ENCODE measurements at regions of chr12 and their contacts with region 1.

Region 1: GRCh38 chr12:6752921-6753771 is at the start of gene MLF2:
- DNase-seq: peak; percentile 94 to 99 (median 96)
- ATAC-seq: peak; percentile 92
- H3K4me3 ChIP-seq: peak within 1 kb of the TSS; percentile 80
- H3K4me3 Mint-ChIP-seq: peak within 1 kb of the TSS; percentile 96
- H3K27ac ChIP-seq: peak within 1 kb of the TSS; percentile 86 to 96
- H3K27ac Mint-ChIP-seq: peak within 1 kb of the TSS; percentile 100
- H3K4me1 ChIP-seq: peaks cover 24% of the 10 kb centered on the region
- H3K4me1 Mint-ChIP-seq: peaks cover 19% of the 10 kb centered on the region
- H3K27me3 ChIP-seq: no peaks in the 10 kb centered on the region
- H3K27me3 Mint-ChIP-seq: no peaks in the 10 kb centered on the region
- CTCF ChIP-seq: peak; percentile 79
- total RNA-seq, gene MLF2: 114 to 121 TPM

Region 2: GRCh38 chr12:6662906-6663742 is 90.0 kb before region 1 on chr12 and contains the start of gene ING4:
- CTCF ChIA-PET with region 1: no interaction called
- POLR2A ChIA-PET with region 1: no interaction called
- intact Hi-C with region 1: loop called in 1 of 2 experiments (anchors 1 kb)
- DNase-seq: peak; percentile 88 to 99 (median 94)
- ATAC-seq: peak; percentile 97
- H3K4me3 ChIP-seq: peak within 1 kb of the TSS; percentile 82
- H3K4me3 Mint-ChIP-seq: peak within 1 kb of the TSS; percentile 95
- H3K27ac ChIP-seq: peak within 1 kb of the TSS; percentile 79 to 89
- H3K27ac Mint-ChIP-seq: peak within 1 kb of the TSS; percentile 91
- H3K4me1 ChIP-seq: peaks cover 29% of the 10 kb centered on the region
- H3K4me1 Mint-ChIP-seq: peaks cover 34% of the 10 kb centered on the region
- H3K27me3 ChIP-seq: no peaks in the 10 kb centered on the region
- H3K27me3 Mint-ChIP-seq: no peaks in the 10 kb centered on the region
- CTCF ChIP-seq: no peak
- total RNA-seq, gene ING4: 13.8 to 17.4 TPM

Region 3: DNA sequence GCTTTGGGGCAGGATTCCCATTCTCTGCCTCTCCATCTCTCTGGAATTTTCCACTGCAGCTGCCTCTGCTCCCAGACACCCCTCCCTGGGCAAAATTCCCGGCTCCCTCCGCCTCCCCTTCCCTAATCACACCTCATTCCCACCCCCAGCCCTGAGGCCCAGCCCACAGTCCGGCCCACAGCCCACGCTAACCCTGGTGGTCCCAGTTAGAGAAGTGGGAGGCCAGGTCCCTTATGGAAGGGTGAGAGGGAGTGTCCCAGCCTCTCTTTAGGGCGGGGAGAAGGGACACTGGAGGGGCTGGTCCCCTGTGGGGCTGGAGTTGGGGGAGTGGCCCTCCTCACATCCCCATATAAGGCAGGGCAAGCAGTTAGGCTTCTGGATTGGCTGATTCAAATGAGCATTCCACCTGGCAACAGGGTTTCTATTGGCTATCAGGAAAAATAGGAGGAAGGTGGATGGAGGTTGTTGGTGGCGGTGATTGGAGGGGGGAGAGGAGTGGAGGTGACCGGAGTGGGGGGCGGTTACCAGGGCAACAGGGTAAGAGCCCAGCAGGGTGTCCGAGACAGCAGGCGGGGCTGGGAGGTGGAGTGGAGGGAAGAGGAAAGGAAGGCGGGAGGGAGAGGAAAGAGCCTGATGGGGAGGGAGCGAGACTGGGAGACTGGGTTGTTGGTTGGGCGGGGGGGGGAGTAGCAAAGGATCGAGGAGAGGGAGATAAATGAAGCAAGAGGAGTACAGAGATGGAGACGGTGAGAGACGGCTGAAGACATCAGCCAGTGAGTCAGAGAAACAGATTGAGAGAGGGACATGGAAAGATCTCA is 11.1 kb after region 1 on chr12:
- CTCF ChIA-PET with region 1: interaction called, 27 read pairs
- POLR2A ChIA-PET with region 1: interaction called, 20 read pairs
- intact Hi-C with region 1: no loop called
- DNase-seq: peak in 7 of 14 experiments; percentile 25 to 82 (median 48)
- ATAC-seq: peak; percentile 83
- H3K4me3 ChIP-seq: peak overlapping the region; percentile 10
- H3K4me3 Mint-ChIP-seq: peak overlapping the region; percentile 65
- H3K27ac ChIP-seq: no peak overlapping the region
- H3K27ac Mint-ChIP-seq: no peak overlapping the region
- H3K4me1 ChIP-seq: peaks cover 34% of the 10 kb centered on the region
- H3K4me1 Mint-ChIP-seq: peaks cover 38% of the 10 kb centered on the region
- H3K27me3 ChIP-seq: peaks cover 22 to 31% of the 10 kb centered on the region in 2 experiments
- H3K27me3 Mint-ChIP-seq: peaks cover 46% of the 10 kb centered on the region
- CTCF ChIP-seq: no peak

Region 4: GRCh38 chr12:6786416-6787094 is 33.4 kb after region 1 on chr12:
- CTCF ChIA-PET with region 1: interaction called, 21 read pairs
- POLR2A ChIA-PET with region 1: interaction called, 18 read pairs
- intact Hi-C with region 1: loop called in 1 of 2 experiments (anchors 2 kb)
- DNase-seq: peak in 5 of 14 experiments; percentile 38 to 79 (median 67)
- ATAC-seq: peak; percentile 79
- H3K4me3 ChIP-seq: peak overlapping the region; percentile 19
- H3K4me3 Mint-ChIP-seq: peak overlapping the region; percentile 72
- H3K27ac ChIP-seq: peak overlapping the region; percentile 58 to 80
- H3K27ac Mint-ChIP-seq: peak overlapping the region; percentile 93
- H3K4me1 ChIP-seq: peaks cover 88% of the 10 kb centered on the region
- H3K4me1 Mint-ChIP-seq: peaks cover 73% of the 10 kb centered on the region
- H3K27me3 ChIP-seq: no peaks in the 10 kb centered on the region
- H3K27me3 Mint-ChIP-seq: no peaks in the 10 kb centered on the region
- CTCF ChIP-seq: no peak

Region 5: GRCh38 chr12:6825398-6826124 is 72.4 kb after region 1 on chr12:
- CTCF ChIA-PET with region 1: interaction called, 10 read pairs
- POLR2A ChIA-PET with region 1: interaction called, 57 read pairs
- intact Hi-C with region 1: loop called (anchors 1 kb)
- DNase-seq: peak; percentile 71 to 90 (median 80)
- ATAC-seq: peak; percentile 65
- H3K4me3 ChIP-seq: no peak overlapping the region
- H3K4me3 Mint-ChIP-seq: peak overlapping the region; percentile 5
- H3K27ac ChIP-seq: no peak overlapping the region
- H3K27ac Mint-ChIP-seq: no peak overlapping the region
- H3K4me1 ChIP-seq: peaks cover 51% of the 10 kb centered on the region
- H3K4me1 Mint-ChIP-seq: peaks cover 26% of the 10 kb centered on the region
- H3K27me3 ChIP-seq: peaks cover 19 to 29% of the 10 kb centered on the region in 2 experiments
- H3K27me3 Mint-ChIP-seq: peaks cover 32% of the 10 kb centered on the region
- CTCF ChIP-seq: peak; percentile 94

Region 6: DNA sequence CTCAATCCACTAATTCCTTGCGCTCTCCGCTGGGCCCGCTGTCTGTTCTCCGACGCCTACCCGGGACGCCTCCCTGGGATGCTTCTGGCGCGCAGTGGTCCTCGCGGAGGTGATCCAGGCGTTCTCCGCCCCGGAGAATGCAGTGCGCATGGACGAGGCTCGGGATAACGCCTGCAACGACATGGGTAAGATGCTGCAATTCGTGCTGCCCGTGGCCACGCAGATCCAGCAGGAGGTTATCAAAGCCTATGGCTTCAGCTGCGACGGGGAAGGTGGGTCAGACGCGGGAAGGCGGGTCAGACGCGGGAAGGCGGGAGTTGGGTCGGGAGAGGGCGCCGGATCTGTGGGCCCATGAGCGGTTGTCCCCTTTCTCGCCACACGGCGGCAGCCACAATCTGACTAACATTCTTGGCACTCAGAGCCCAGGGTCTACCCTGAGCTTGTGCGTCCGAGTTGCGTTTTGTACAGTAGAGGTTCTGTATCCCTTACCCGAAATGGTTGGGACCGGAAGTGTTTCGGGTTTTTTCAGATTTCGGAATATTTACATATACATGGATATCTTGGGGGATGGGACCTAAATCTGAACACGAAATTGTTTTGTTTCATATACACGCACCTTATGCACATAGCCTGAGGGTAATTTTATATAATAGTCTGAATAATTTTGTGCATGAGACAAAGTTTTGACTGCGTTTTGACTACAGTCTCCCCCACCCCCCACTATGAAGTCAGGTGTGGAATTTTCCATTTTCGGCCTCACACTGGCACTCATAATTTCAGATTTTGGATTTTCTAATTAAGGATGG is 191.4 kb after region 1 on chr12:
- CTCF ChIA-PET with region 1: no interaction called
- POLR2A ChIA-PET with region 1: interaction called, 11 read pairs
- intact Hi-C with region 1: no loop called
- DNase-seq: peak; percentile 75 to 94 (median 84)
- ATAC-seq: peak; percentile 51
- H3K4me3 ChIP-seq: peak overlapping the region; percentile 65
- H3K4me3 Mint-ChIP-seq: peak overlapping the region; percentile 97
- H3K27ac ChIP-seq: peak overlapping the region; percentile 96 to 98
- H3K27ac Mint-ChIP-seq: peak overlapping the region; percentile 97
- H3K4me1 ChIP-seq: peaks cover 74% of the 10 kb centered on the region
- H3K4me1 Mint-ChIP-seq: peaks cover 73% of the 10 kb centered on the region
- H3K27me3 ChIP-seq: no peaks in the 10 kb centered on the region
- H3K27me3 Mint-ChIP-seq: no peaks in the 10 kb centered on the region
- CTCF ChIP-seq: peak; percentile 92